Transverse colon (tissue), 4 donors: ENCODE measurements at regions of chr18 and their contacts with region 1.

Region 1: DNA sequence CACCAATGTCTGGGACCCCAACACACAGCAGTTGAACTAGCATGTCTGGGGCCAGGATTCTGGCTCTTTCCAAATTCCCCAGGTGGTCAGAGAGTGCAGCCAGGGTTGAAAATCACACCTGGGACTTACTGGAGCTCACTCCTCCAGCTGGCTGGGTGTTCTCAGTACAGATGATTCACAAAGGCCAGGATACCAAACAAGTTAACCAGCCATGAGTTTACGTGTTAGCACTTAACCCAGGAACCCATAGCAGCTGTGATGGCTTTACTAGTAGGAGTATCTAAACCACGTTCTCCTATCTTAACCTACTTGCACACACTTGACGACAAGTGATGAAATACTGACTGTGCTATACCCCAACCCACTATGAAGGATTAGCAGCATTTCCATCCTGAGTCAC is 222.8 kb downstream of the FBXO15 start:
- DNase-seq: no peak
- H3K4me3 ChIP-seq: no peak overlapping the region
- H3K27ac ChIP-seq: no peak overlapping the region
- H3K4me1 ChIP-seq: no peaks in the 10 kb centered on the region
- H3K27me3 ChIP-seq: no peaks in the 10 kb centered on the region
- CTCF ChIP-seq: no peak
- EP300 ChIP-seq: no peak
- POLR2A ChIP-seq: no peak

Region 2: DNA sequence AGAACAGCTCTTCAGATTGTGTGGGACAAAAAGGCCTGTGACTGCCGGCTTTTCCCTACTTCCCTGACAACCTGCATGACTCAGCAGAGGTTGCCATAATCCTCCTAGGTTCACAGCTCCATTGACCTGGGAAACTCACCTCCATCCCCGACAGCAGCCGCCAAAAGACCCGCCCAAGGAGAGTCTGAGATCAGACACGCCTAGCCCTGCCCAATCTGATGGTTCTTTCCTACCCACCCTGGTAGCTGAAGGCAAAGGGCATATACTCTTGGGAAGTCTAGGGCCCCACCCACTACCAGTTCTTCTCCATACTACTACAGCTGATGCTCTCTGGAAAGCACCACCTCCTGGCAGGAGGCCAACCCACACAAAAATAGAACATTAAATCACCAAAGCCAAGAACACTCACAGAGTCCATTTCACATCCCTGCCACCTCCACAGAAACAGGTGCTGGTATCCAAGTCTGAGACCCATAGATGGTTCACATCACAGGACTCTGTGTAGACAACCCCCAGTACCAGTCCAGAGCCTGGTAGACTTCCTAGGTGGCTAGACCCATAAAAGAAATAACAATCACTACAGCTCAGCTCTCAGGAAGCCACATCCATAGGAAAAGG is 1197.7 kb before region 1 on chr18:
- in situ Hi-C with region 1: no loop called
- intact Hi-C with region 1: loop called (anchors 5 kb)
- DNase-seq: no peak
- H3K4me3 ChIP-seq: no peak overlapping the region
- H3K27ac ChIP-seq: no peak overlapping the region
- H3K4me1 ChIP-seq: no peaks in the 10 kb centered on the region
- H3K27me3 ChIP-seq: no peaks in the 10 kb centered on the region
- CTCF ChIP-seq: no peak
- EP300 ChIP-seq: no peak
- POLR2A ChIP-seq: no peak